ENCODE measurements at regions of chr6 and their contacts with region 1.

Region 1: DNA sequence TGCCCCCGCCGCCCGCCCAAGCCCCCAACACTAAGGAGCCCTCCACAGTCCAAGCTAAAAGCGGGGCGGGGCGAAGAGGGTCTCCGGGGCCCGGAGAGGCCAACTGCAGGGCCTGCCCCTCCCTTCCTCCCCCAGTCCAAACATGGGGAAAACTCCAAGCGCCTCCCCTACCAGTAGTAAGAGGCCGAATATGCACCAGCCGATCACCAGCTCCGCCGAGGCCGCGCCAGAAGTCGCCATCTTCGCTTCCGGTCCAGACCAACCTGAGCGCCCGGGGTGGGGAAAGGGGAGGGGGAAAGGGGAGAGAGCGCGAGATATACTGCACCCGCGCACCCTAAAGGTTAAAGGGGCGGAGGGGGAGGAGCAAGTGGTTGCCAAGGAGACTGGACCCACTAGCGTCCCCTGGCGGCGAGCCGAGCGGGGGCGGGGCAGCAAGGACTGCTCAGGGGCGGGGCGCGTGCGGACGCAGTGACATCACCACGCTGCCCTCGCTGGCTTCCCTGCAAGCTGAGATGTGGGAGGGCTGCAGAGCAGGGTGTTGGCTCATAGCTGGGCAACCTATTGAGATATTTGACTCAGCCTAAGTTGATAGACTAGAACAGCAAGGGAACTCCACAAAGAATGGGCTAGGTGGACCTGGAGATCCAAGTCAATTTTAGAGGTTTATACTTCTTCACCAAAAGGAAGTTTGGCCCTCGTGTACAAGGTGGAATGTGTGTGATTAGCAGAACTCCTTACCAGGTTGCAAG is at the start of gene LMBRD1:
- DNase-seq: peak; percentile 78
- ATAC-seq: peak; percentile 98
- H3K4me3 ChIP-seq: peak within 1 kb of the TSS; percentile 76 to 89
- H3K27ac ChIP-seq: peak within 1 kb of the TSS; percentile 78
- H3K4me1 ChIP-seq: peaks cover 10% of the 10 kb centered on the region
- H3K27me3 ChIP-seq: no peaks in the 10 kb centered on the region
- CTCF ChIP-seq: peak; percentile 100
- total RNA-seq, gene LMBRD1: 17.9 TPM

Region 2: DNA sequence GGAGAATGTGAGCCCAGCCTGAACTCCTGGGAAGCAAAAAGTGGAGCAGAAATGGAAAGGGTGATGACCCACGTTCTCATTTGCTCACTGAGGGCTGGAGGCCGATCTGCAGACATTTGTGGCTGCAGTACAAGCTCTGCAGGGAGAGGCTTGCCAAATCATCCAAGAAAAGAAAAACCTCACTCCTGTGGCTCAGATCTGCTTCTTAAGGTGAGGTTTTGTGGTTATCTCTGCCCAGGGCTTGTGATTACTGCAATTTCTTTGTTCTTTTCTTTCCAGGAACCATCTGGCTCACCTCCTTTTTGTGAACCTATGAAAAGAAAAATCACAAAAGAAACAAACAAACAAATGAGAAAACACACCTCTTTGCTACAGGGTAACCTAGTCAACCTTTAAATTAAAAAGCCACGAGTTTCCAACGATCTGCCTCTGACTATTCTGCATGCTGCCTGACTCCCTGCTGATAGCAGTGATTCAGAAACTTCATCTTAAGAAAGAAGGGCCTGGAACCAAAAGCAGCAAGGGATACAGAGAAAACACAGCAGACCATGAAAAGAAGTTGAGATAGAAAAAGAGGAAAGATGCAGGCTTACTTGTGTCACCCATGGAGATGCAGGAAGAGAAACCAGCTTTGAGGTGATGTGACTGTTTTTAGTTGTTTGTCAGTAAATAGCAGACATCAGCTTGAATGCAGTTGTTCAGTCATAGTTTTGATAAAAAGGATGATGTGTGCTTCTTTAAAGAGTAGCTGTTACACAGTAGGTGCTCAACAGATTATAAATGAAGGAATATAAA is 165.1 kb before region 1 on chr6:
- CTCF ChIA-PET with region 1: interaction called, 10 read pairs
- POLR2A ChIA-PET with region 1: no interaction called
- in situ Hi-C with region 1: no loop called
- intact Hi-C with region 1: no loop called
- DNase-seq: no peak
- ATAC-seq: no peak
- H3K4me3 ChIP-seq: no peak overlapping the region
- H3K27ac ChIP-seq: no peak overlapping the region
- H3K4me1 ChIP-seq: no peaks in the 10 kb centered on the region
- H3K27me3 ChIP-seq: no peaks in the 10 kb centered on the region
- CTCF ChIP-seq: no peak

Measured in Panc1 (cell line).